OCI-LY7 (cell line): ENCODE measurements at regions of chr5 and their contacts with region 1.

Region 1: DNA sequence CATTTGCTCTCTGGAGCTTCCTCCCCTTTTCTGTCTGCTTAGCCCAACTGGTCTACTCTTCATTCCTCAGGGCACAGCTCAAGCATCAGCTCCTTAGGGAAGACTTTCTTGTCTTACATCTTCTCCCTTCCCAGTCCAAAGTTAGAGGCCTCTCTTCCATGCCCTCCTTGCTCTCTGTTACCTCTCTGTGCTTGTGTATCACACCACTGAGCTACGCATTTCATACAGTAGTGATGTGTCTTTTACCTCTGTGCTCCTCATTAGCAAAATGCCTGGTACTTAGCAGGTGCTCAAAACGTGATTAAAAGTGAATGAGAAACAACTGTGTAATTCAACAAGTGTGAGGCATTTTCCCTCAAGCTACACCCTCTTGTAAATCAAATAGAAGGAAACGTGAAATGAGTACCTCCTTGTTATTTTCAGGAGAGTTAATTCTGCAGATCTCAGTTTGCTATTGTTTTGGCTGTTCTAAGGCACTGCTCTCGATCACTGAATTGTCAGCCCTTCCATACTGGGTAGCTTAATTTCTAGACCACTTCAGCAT is 39.0 kb downstream of the ERAP1 start:
- DNase-seq: no peak
- H3K4me3 ChIP-seq: no peak overlapping the region
- H3K27ac ChIP-seq: no peak overlapping the region
- H3K4me1 ChIP-seq: no peaks in the 10 kb centered on the region
- CTCF ChIP-seq: no peak

Region 2: DNA sequence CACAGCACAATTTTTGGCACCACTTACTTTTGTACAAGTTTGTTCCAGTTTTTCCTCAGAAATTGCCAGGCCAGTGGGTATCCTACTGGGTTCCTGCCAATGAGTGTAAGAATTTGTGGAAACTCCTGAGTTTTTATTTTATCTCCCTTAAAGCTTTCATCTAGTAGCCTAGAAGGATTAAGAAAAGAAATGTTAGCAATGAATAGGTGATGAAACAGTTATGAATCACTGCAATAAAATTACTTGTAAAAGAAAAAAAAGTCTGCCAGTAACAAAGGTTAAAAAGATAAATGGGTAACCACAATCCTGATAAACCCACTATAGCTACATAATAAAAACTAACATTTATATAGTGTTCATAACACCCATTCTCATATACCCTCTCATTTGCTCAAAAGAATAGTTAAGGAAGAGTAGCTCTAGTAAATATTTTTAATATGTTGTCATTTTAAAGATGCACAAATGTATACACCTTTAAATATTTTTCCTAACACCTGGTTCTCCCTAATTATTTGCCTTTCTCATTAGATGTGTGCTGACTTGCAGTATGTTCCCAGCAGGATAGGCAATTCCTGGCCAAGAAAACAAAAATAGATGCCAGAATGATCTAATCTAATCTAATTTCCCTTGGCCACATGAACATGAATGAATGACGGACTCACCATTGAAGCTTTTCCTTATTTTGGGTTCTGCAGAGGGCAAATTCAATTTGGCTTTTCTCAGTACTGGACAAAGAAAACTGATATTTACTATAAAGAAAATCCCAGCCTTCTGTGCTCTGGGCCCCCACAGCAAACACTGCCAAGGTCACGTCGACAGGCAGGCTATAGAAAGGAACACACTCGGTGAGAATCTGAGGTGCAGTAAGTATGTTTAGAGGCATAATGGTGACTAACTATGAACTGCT is 12.5 kb after region 1 on chr5:
- CTCF ChIA-PET with region 1: no interaction called
- POLR2A ChIA-PET with region 1: interaction called, 10 read pairs
- intact Hi-C with region 1: no loop called
- DNase-seq: no peak
- H3K4me3 ChIP-seq: no peak overlapping the region
- H3K27ac ChIP-seq: no peak overlapping the region
- H3K4me1 ChIP-seq: no peaks in the 10 kb centered on the region
- CTCF ChIP-seq: no peak

Region 3: GRCh38 chr5:96855031-96855872 is 86.5 kb after region 1 on chr5:
- CTCF ChIA-PET with region 1: no interaction called
- POLR2A ChIA-PET with region 1: no interaction called
- intact Hi-C with region 1: no loop called
- DNase-seq: no peak
- H3K4me3 ChIP-seq: no peak overlapping the region
- H3K27ac ChIP-seq: no peak overlapping the region
- H3K4me1 ChIP-seq: no peaks in the 10 kb centered on the region
- CTCF ChIP-seq: no peak

Region 4: DNA sequence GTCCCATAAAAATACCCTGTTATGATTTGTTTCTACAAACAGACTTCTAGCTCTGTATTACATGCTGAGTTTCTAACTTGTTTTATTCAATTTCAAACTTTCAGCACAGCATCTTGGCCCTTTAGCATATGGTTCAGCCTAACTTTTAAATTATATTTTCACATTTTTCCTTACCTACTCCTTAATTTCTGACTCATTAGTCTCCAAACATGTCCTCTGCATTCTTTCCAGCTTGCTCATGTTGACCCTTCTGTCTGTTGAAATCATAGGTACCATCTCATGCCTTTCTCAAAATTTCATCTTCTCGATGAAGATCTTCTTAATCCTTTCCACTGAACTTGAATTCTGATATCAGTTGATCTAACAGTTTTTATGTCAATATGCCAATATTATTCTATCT is 615.2 kb after region 1 on chr5:
- CTCF ChIA-PET with region 1: no interaction called
- POLR2A ChIA-PET with region 1: no interaction called
- intact Hi-C with region 1: no loop called
- DNase-seq: no peak
- H3K4me3 ChIP-seq: no peak overlapping the region
- H3K27ac ChIP-seq: no peak overlapping the region
- H3K4me1 ChIP-seq: no peaks in the 10 kb centered on the region
- CTCF ChIP-seq: no peak